Posterior cingulate gyrus (tissue), 11 donors: ENCODE measurements at regions of chr15 and their contacts with region 1.

Region 1: GRCh38 chr15:50260969-50261496 is 4.5 kb downstream of the HDC start:
- DNase-seq: no peak

Region 2: DNA sequence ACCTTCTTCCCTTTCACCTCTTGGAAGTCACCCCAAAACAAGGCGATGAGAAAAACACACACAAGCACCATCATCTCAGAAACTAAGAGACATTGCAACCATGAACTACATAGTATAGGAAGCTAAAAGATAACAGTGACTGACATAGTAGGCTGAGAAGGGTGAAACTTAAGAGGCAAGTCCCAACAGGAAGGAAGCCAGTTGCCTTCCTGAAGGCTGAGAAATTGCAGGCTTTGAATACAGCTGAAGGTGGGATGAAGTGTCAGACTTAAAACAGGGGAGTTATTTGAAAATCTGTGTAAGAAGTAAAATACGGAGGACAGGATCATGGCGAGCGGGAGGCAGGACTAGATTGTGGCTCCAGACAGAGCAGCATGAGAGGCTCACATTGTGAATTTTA is 51.2 kb before region 1 on chr15:
- intact Hi-C with region 1: loop called (anchors 10 kb)
- DNase-seq: no peak